ENCODE measurements at regions of chr10 and their contacts with region 1.

Region 1: DNA sequence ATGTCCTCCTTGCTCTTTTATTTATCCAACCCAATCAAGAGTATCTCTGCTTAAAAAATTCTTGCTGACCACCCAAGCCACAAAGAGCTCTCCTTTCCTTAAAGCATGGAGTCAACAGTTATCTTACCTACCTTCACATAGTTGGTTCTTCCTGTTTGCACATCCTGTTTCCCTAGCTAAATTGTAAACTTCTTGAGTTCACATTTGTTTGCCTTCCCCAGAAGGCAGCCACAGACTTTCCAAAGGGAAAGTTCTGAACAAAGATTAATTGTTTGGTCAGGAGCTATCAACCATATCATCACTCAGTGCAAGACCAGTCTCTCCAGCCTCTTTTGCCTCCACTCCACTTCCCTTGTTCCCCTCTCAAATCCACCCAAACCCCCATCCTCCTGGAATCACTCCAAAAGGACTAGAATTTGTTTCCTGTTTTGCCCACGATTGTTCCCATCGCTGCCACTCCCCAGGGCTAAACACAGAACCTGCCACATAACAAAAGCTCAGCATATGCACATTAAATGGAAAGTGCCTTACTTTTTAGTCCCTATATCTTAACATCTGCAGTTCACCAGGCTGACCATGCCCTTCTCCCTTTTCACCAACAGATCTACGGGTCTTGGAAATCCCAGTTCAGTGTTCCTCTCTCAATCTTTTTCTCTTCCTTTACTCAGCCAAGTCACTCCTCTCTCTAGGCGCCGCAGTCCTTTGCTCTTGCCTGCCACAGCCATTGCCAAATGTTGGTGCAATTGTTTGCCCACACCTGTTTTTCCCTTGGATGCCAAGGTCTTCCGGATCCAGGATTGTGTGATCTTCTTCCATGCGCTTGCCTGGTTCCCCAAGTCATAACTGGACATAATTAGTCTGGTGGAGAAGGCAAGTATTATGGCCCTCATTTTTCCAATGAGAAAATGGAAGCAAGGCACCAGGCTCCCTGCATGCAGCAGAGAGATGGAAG is 265.5 kb downstream of the KCNMA1 start:
- DNase-seq: no peak
- H3K4me3 ChIP-seq: no peak overlapping the region
- H3K27ac ChIP-seq: peak overlapping the region in 3 of 4 donors; percentile 5 to 89 (median 21)
- H3K4me1 ChIP-seq: peaks cover 3 to 59% (median 51%) of the 10 kb centered on the region in 4 donors
- H3K27me3 ChIP-seq: no peaks in the 10 kb centered on the region
- CTCF ChIP-seq: no peak
- EP300 ChIP-seq: no peak
- POLR2A ChIP-seq: no peak

Region 2: DNA sequence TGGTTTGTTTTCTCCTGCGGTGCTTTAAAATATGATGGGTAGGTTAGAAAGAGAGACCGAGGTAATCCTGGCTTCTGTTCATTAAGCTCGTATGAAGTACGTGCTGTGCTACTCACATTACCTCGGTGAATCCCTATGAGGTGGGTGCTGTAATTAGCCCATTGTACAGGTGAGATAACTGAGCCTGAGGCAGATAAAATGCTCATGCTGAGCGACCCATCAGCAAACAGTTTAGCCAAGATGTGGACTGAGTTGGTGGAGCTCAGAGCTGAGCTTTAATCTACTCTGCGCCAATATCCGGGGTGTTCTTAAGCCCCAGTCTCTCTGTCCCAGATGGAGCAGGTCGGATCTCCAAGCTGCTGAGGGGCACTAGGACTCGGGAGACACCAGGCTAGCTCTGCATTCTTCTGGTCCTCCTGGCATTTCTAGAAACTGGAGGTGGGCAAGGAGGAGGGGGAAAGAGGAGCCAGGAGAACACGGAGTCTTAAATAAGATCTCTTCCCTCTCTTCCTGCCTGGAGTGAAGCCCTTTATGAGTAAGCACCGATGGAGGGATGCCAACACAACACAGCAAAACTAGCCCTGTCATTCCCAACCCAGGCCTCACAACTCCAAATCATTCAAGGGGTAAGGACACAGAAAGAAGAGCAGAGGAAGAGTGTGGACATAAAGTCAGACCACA is 193.0 kb before region 1 on chr10:
- intact Hi-C with region 1: loop called (anchors 5 kb)
- DNase-seq: peak; percentile 87
- H3K4me3 ChIP-seq: no peak overlapping the region
- H3K27ac ChIP-seq: peak overlapping the region; percentile 55 to 84 (median 72)
- H3K4me1 ChIP-seq: peaks cover 0 to 68% (median 56%) of the 10 kb centered on the region in 4 donors
- H3K27me3 ChIP-seq: no peaks in the 10 kb centered on the region
- CTCF ChIP-seq: no peak
- EP300 ChIP-seq: no peak
- POLR2A ChIP-seq: no peak

Region 3: DNA sequence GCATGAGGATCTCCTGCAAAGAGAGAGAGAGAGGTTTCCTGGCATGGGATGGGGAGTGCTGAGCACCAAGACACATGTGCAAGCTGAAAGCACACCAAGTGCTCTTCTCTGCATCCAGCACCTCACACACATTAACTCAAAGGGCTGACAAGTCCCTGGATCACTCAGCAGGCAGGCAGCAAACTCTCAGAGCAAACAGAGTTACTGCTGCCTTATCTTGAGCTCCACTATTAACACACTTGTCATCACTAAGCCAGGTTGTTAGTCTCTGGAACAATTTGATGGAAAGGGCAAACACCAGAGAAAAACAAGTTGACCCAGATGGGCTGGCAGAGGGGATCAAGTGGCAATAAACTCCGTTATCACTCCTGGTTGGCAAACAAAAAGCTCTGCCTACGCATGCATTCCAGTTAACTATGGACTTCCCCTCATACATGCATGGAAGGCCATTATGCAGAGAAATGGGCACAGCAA is 84.4 kb before region 1 on chr10:
- intact Hi-C with region 1: loop called (anchors 5 kb)
- DNase-seq: peak; percentile 84
- H3K4me3 ChIP-seq: no peak overlapping the region
- H3K27ac ChIP-seq: peak overlapping the region; percentile 64 to 78 (median 72)
- H3K4me1 ChIP-seq: peaks cover 4 to 93% (median 75%) of the 10 kb centered on the region in 4 donors
- H3K27me3 ChIP-seq: no peaks in the 10 kb centered on the region
- CTCF ChIP-seq: no peak
- EP300 ChIP-seq: peak; percentile 6 to 90 (median 36)
- POLR2A ChIP-seq: no peak

Region 4: DNA sequence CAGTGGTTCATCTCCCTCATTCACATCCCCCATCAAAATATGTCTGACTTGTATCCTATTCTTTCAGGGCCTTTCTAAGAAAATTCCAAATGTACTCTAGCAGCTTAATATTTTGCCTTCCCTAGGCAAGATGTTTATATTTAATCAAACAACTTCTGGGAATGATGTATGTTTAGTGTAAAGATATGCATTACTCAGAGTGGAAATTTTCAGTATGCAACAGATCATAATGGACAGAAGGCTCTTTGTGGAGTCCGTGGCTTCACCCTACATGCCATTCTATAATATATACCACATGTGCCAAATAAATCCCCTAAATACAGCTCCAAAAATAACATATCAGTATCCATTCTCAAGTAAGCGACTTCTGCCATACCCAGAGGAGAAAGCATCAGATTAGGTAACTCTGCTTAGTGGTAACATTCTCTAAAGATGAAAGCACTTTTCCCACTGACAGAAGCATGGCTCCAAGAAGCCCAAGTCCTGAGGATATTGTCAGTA is 51.1 kb before region 1 on chr10:
- intact Hi-C with region 1: loop called (anchors 5 kb)
- DNase-seq: no peak
- H3K4me3 ChIP-seq: no peak overlapping the region
- H3K27ac ChIP-seq: peak overlapping the region in 2 of 4 donors; percentile 55 to 58
- H3K4me1 ChIP-seq: peaks cover 0 to 49% (median 37%) of the 10 kb centered on the region in 4 donors
- H3K27me3 ChIP-seq: no peaks in the 10 kb centered on the region
- CTCF ChIP-seq: no peak
- EP300 ChIP-seq: no peak
- POLR2A ChIP-seq: no peak

Measured in sigmoid colon (tissue), 7 donors.